ENCODE measurements at regions of chrX and their contacts with region 1.

Region 1: DNA sequence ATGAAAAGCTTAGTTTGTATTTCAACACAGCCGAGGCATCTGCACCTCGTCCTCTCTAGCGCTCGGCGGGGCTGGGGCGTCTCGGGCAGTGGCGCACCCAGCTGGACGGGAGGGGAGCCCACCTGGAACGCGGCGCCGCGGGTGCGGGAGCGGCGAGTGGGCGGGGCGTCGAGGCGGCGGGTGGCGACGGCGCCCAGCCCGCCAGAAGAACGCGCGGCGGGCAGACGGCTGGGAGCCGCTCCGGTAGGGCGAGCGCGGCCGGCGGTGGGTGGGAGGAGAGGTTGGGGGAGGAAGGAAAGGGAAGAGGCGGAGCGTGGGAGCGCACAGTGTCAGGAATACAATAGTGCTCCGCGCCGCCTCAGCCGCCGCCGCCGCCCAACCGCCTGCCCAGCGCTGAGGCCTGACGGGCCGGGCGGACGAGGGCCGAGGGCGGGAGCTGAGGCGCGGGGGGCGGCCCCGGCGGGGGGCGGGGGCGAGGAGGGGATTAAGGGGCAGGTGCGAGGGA is at the start of gene JADE3:
- DNase-seq: peak; percentile 71
- H3K4me3 Mint-ChIP-seq: peak within 1 kb of the TSS; percentile 76
- H3K27ac Mint-ChIP-seq: peak within 1 kb of the TSS; percentile 51
- H3K4me1 Mint-ChIP-seq: no peaks in the 10 kb centered on the region
- H3K27me3 Mint-ChIP-seq: peaks cover 70% of the 10 kb centered on the region
- CTCF ChIP-seq: no peak
- total RNA-seq, gene JADE3: 7.8 and 9.4 TPM in 2 replicates

Region 2: DNA sequence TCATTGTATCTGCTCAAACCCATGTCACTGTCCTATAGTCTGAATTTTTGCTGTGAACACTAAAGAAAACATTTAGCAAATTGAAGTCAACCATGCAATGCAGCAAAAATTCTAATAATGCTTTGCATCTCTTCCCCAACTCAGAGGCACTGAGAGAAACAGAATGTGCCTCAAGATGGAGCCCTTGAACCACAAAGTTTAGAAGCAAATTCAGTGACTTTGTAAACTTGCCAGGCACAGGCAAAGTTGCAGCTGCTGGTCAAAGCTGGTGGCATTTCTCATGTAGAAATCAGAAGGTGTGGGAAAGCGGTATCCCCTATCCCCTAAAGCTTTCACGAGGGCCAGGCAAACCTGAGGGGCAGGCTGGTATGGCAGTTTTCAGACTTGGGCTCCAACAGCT is 1589.8 kb before region 1 on chrX:
- CTCF ChIA-PET with region 1: no interaction called
- POLR2A ChIA-PET with region 1: no interaction called
- intact Hi-C with region 1: no loop called
- DNase-seq: peak; percentile 77
- H3K4me3 Mint-ChIP-seq: no peak overlapping the region
- H3K27ac Mint-ChIP-seq: no peak overlapping the region
- H3K4me1 Mint-ChIP-seq: no peaks in the 10 kb centered on the region
- H3K27me3 Mint-ChIP-seq: peaks cover 68% of the 10 kb centered on the region
- CTCF ChIP-seq: peak; percentile 63

Region 3: DNA sequence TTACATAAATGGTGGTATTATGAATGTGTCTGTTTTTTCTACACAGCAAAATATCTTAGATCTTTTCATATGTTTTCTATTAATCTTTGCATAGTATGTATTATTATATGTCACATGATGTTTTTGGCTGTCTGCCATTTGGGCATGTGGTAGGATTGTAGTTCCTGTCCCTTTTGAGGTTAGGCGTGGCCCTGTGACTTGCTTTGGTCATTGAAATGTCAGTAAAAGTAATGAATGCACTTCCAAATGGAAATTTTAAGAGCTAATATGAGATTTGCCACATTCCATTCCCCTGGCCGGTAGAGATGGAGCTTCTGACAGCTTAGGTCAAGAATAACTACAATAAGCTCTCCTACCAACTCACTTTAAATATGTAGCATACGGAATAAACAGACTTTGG is 45.1 kb after region 1 on chrX:
- CTCF ChIA-PET with region 1: interaction called, 3 read pairs
- POLR2A ChIA-PET with region 1: interaction called, 12 read pairs
- intact Hi-C with region 1: no loop called
- DNase-seq: peak; percentile 4
- H3K4me3 Mint-ChIP-seq: no peak overlapping the region
- H3K27ac Mint-ChIP-seq: no peak overlapping the region
- H3K4me1 Mint-ChIP-seq: peaks cover 12% of the 10 kb centered on the region
- H3K27me3 Mint-ChIP-seq: peaks cover 28% of the 10 kb centered on the region
- CTCF ChIP-seq: no peak

Region 4: GRCh38 chrX:46967547-46967946 is 55.4 kb after region 1 on chrX:
- CTCF ChIA-PET with region 1: interaction called, 3 read pairs
- POLR2A ChIA-PET with region 1: interaction called, 12 read pairs
- intact Hi-C with region 1: no loop called
- DNase-seq: peak; percentile 3
- H3K4me3 Mint-ChIP-seq: no peak overlapping the region
- H3K27ac Mint-ChIP-seq: no peak overlapping the region
- H3K4me1 Mint-ChIP-seq: peaks cover 19% of the 10 kb centered on the region
- H3K27me3 Mint-ChIP-seq: peaks cover 66% of the 10 kb centered on the region
- CTCF ChIP-seq: no peak

Region 5: DNA sequence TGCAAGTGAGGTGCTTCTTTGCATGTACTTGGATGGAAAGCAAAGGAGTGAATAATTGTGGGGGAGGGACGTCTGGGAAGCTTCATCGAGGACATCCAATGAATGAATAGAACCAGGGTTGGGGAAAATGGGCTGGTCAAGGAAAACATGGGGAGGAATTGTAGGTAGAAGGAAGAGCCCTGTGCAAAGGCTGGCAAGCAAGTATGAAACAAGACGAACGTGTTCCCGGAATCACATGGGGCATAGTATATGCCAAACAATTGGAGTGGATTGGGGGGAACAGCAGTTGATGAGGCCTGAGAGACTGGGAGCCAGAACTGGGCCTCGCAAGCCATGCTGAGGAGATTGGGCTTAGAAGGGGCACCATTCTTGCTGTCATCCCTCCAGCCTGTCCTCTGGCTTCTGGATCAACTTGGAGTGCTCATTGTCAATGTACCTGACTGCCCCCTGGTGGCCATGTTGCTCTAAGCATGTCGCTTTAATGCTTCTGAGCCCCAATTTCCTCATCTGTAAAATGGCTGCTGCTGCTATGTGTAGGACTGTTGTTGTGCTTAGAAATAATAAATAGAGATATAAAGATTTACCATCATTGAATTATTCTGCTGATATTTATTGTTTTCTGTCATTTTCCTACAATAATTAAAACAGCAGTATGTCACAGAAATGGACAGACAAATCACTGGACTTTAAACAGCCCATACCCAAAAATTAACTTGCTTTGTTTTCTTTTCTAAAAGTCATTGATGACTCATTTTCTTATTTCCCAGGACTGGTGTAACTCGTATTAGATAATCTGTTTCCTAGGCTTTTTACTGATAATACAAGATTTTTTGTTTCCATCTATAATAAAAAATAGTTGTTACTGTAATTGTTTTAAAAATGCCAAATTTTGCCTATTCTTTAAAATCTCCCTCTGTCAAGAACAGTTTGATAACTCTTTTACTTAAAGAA is 66.5 kb after region 1 on chrX:
- CTCF ChIA-PET with region 1: interaction called, 11 read pairs
- POLR2A ChIA-PET with region 1: interaction called, 8 read pairs
- intact Hi-C with region 1: loop called (anchors 1 kb)
- DNase-seq: peak; percentile 86
- H3K4me3 Mint-ChIP-seq: no peak overlapping the region
- H3K27ac Mint-ChIP-seq: peak overlapping the region; percentile 67
- H3K4me1 Mint-ChIP-seq: no peaks in the 10 kb centered on the region
- H3K27me3 Mint-ChIP-seq: peaks cover 56% of the 10 kb centered on the region
- CTCF ChIP-seq: peak; percentile 71

Region 6: GRCh38 chrX:47101206-47101605 is 189.1 kb after region 1 on chrX:
- CTCF ChIA-PET with region 1: no interaction called
- POLR2A ChIA-PET with region 1: no interaction called
- intact Hi-C with region 1: no loop called
- DNase-seq: no peak
- H3K4me3 Mint-ChIP-seq: no peak overlapping the region
- H3K27ac Mint-ChIP-seq: no peak overlapping the region
- H3K4me1 Mint-ChIP-seq: no peaks in the 10 kb centered on the region
- H3K27me3 Mint-ChIP-seq: peaks cover 57% of the 10 kb centered on the region
- CTCF ChIP-seq: no peak